Right ventricle myocardium superior (tissue), 1 donor: ENCODE measurements at regions of chr5 and their contacts with region 1.

Region 1: DNA sequence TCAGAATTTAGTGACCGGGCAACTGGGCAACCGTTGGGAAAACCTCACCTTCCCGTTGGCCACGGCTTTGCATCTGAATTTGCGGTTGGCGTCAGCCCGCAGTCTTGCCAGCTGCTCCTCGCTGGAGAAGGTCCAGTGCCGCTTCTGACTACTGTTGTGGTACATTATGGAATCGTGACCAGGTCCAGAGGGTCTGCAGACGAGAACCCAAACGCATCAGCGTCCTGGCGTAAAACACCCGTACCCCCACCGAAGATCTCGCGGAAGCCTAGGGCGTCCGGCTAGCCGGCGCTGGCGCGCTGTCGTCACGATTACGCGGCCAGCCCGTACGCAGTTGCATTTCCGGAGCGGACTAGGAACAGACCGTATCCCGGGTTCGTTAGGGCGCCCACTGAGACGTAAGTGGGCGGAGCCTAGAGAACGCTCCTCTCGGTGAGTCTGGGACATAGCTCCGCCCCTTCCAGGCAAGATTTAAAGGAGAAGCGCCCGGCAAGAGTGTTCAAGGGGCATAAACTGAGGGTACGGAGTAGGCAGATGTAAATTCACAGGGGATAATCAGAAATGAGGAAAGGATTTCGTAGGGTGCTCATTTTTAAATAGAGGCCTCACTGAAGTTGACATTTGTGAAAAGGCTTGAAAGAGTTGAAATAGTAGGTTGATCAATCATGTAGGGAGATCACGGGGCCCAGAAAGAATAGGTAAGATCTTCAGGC is at the start of gene CCNH:
- DNase-seq: peak; percentile 98
- ATAC-seq: peak; percentile 99
- total RNA-seq, gene CCNH: 16.6 TPM

Region 2: GRCh38 chr5:87267574-87268125 is 145.1 kb before region 1 on chr5 and contains the start of gene RASA1:
- intact Hi-C with region 1: loop called (anchors 10 kb)
- DNase-seq: peak; percentile 97
- ATAC-seq: peak; percentile 98
- total RNA-seq, gene RASA1: 18.1 TPM

Region 3: DNA sequence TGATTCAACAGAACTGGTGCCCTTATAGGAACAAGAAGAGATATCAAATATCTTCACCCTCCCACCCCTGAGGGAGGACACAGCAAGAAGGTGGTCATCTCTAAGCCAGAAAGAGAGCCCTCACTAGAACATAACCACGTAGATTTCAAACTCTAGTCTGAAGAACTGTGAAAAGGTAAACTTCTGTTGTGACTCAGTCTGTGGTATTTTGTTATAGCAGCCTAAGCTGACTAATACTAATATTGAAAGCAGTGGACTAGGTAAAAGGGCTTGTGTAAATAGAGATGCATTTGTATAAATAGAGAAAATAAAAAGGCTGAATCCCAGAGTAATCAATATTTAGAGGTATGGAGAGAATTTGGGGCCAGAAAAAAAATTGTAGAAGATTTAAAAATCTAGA is 157.6 kb after region 1 on chr5:
- intact Hi-C with region 1: no loop called
- DNase-seq: no peak
- ATAC-seq: no peak